Mammary epithelial cell (primary cell): ENCODE measurements at regions of chr10 and their contacts with region 1.

Region 1: DNA sequence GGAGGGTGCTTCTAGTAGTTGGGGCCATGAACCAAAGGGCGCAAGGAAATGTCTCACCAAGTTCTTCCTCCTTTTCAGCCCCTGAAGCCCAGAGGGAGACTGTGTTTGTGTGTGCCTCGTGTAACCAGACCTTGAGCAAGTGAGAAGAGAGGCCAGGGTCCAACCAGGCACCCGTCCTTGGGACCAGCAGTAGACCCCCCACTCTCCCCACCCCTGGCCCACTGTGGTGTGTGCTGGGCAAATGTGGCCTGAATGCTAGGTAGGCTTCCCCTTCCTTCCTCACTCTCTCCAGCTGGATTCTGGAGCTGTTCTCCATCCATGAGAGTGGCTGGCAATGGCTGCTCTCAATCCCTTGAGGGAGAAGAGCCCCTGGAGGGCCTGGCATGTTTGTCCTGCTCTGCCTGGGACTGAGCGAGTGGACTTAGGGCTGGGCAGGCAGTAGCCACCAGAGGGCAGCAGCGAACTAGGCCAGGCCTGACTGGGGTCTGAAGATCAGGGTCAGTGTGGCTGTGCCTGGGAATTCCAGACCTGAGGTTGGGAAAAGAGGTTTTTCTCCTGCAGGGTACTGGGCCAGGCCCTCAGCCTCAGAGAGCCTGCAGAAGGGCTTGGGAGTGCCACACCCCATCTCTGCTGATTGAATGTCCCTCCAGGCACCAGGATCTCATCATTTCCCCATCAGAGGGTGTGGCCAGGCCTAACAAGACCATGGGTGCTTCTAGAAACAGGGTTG is 12.5 kb downstream of the SFRP5 start:
- DNase-seq: peak; percentile 27
- H3K4me3 ChIP-seq: no peak overlapping the region
- H3K27ac ChIP-seq: no peak overlapping the region
- H3K4me1 ChIP-seq: peaks cover 3% of the 10 kb centered on the region
- H3K27me3 ChIP-seq: no peaks in the 10 kb centered on the region
- CTCF ChIP-seq: peak; percentile 88 to 91

Region 2: GRCh38 chr10:97454330-97455036 is 304.8 kb before region 1 on chr10:
- CTCF ChIA-PET with region 1: no interaction called
- dilution Hi-C with region 1: no loop called
- in situ Hi-C with region 1: no loop called
- intact Hi-C with region 1: no loop called
- DNase-seq: peak; percentile 35
- H3K4me3 ChIP-seq: no peak overlapping the region
- H3K27ac ChIP-seq: no peak overlapping the region
- H3K4me1 ChIP-seq: peaks cover 16% of the 10 kb centered on the region
- H3K27me3 ChIP-seq: no peaks in the 10 kb centered on the region
- CTCF ChIP-seq: no peak

Region 3: GRCh38 chr10:97792141-97792721 is 32.9 kb after region 1 on chr10:
- CTCF ChIA-PET with region 1: no interaction called
- dilution Hi-C with region 1: loop called (anchors 5 kb)
- in situ Hi-C with region 1: no loop called
- intact Hi-C with region 1: no loop called
- DNase-seq: peak; percentile 39
- H3K4me3 ChIP-seq: no peak overlapping the region
- H3K27ac ChIP-seq: no peak overlapping the region
- H3K4me1 ChIP-seq: no peaks in the 10 kb centered on the region
- H3K27me3 ChIP-seq: no peaks in the 10 kb centered on the region
- CTCF ChIP-seq: peak; percentile 90 to 98

Region 4: GRCh38 chr10:97816609-97817008 is 57.3 kb after region 1 on chr10:
- CTCF ChIA-PET with region 1: no interaction called
- dilution Hi-C with region 1: loop called (anchors 5 kb)
- in situ Hi-C with region 1: no loop called
- intact Hi-C with region 1: no loop called
- DNase-seq: no peak
- H3K4me3 ChIP-seq: no peak overlapping the region
- H3K27ac ChIP-seq: no peak overlapping the region
- H3K4me1 ChIP-seq: peaks cover 4% of the 10 kb centered on the region
- H3K27me3 ChIP-seq: no peaks in the 10 kb centered on the region
- CTCF ChIP-seq: no peak

Region 5: DNA sequence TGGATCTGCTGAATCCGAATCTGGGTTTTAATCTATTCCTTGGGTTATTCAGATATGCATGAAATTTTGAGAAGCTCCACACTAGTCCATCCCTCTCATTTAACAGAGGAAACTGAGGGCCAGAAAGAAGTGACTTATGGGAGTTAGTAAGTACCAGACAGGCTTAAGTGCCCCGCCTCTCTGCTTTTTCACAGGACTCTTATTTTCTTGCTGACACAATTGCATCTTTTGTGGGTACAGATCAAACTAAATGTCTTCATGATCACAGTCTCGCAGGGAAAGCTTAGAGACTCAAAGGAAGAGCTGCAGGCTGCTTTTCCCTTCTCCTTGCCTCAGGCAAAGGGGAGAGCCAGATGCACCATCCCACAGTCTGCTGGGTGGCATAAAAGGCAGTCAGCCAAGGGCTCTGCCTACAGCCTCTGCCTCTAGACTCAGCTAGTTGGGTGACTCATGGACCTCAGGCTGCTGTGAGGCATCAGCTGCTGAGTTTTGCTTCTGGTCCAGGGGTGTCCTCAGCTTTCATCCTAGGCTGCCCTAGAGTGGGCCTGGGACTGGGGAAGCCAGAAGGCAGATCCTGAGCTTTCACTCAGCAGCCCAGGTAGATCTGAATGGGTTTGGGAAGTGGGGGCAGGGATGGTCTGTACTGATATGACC is 101.9 kb after region 1 on chr10:
- CTCF ChIA-PET with region 1: no interaction called
- dilution Hi-C with region 1: loop called (anchors 5 kb)
- in situ Hi-C with region 1: no loop called
- intact Hi-C with region 1: no loop called
- DNase-seq: peak; percentile 93
- H3K4me3 ChIP-seq: no peak overlapping the region
- H3K27ac ChIP-seq: no peak overlapping the region
- H3K4me1 ChIP-seq: peaks cover 10% of the 10 kb centered on the region
- H3K27me3 ChIP-seq: no peaks in the 10 kb centered on the region
- CTCF ChIP-seq: no peak

Region 6: GRCh38 chr10:97869091-97870042 is 110.0 kb after region 1 on chr10:
- CTCF ChIA-PET with region 1: no interaction called
- dilution Hi-C with region 1: loop called (anchors 5 kb)
- in situ Hi-C with region 1: no loop called
- intact Hi-C with region 1: loop called (anchors 1 kb)
- DNase-seq: peak; percentile 86
- H3K4me3 ChIP-seq: no peak overlapping the region
- H3K27ac ChIP-seq: no peak overlapping the region
- H3K4me1 ChIP-seq: peaks cover 9% of the 10 kb centered on the region
- H3K27me3 ChIP-seq: no peaks in the 10 kb centered on the region
- CTCF ChIP-seq: peak; percentile 97

Region 7: GRCh38 chr10:98045785-98046389 is 286.6 kb after region 1 on chr10:
- CTCF ChIA-PET with region 1: no interaction called
- dilution Hi-C with region 1: no loop called
- in situ Hi-C with region 1: no loop called
- intact Hi-C with region 1: loop called (anchors 1 kb)
- DNase-seq: peak; percentile 53
- H3K4me3 ChIP-seq: no peak overlapping the region
- H3K27ac ChIP-seq: no peak overlapping the region
- H3K4me1 ChIP-seq: no peaks in the 10 kb centered on the region
- H3K27me3 ChIP-seq: no peaks in the 10 kb centered on the region
- CTCF ChIP-seq: peak; percentile 90 to 95

Region 8: GRCh38 chr10:98323221-98324164 is 564.2 kb after region 1 on chr10:
- CTCF ChIA-PET with region 1: no interaction called
- dilution Hi-C with region 1: no loop called
- in situ Hi-C with region 1: no loop called
- intact Hi-C with region 1: no loop called
- DNase-seq: peak; percentile 69
- H3K4me3 ChIP-seq: no peak overlapping the region
- H3K27ac ChIP-seq: no peak overlapping the region
- H3K4me1 ChIP-seq: peaks cover 9% of the 10 kb centered on the region
- H3K27me3 ChIP-seq: no peaks in the 10 kb centered on the region
- CTCF ChIP-seq: no peak